ENCODE measurements at regions of chr13 and their contacts with region 1.

Region 1: DNA sequence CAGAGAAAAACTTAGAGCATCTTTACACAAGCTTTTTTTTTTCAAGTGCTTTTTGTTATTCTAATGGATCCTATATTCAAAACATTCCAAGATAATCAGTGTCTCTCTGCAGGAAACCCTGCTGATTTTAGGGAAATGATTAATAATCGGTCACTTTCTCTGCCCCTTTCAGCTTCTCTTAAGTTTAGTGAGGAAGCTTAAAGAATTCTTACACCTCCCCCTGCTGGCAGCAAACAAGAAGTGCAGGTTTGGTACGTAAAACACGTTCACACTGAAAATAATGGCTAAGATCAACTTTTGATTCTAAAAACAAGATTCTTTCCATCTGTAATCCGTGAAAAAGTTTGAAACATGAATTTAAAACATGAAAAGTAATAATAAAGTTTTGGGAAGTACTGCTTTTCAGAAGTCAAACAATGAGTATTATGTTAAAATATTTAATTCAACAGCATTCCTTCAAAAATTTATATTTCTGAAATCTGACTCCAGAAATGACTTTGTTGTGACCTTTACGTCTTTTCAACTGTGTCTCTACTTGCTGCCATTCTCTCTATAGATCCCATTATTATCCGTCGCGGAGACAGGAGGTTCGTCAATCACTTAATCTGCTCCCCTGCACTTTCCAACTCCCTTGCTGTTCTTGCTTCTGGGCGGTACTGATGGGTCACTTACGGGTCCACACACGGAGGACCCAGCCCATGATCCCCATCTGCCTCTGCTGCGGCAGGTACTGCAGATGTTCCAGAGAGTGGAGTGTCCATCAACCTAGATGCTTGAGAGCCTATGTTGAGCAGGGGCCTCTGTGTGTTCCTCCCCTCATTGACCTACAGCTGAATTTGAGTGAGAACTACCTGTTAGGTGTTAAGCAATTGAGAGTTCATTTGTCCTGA is 203.1 kb upstream of the EDNRB start:
- DNase-seq: peak in 8 of 14 experiments; percentile 3 to 72 (median 24)
- ATAC-seq: no peak
- H3K4me3 ChIP-seq: no peak overlapping the region
- H3K4me3 Mint-ChIP-seq: no peak overlapping the region
- H3K27ac ChIP-seq: no peak overlapping the region
- H3K27ac Mint-ChIP-seq: no peak overlapping the region
- H3K4me1 ChIP-seq: no peaks in the 10 kb centered on the region
- H3K4me1 Mint-ChIP-seq: no peaks in the 10 kb centered on the region
- H3K27me3 ChIP-seq: peaks cover 0 to 12% of the 10 kb centered on the region in 2 experiments
- H3K27me3 Mint-ChIP-seq: peaks cover 22% of the 10 kb centered on the region
- CTCF ChIP-seq: peak; percentile 90

Region 2: DNA sequence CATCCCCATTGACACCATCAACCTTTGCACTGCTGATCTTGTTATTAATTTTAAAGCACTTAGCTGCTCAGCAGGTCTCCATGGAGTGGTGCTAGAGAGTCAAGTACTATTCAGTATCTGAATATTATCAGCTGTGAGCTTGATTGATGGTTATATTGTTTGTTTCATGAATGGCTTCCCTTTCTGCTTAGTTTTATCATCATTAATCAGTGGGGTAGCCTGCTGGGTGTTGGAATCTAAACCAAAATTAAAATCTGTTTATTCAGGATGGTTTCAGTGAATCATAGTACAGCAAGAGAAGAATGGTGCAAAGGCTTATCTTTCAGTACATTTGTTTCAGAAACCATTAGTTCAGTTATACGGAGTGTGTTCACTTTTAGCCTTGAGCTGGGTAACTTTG is 628.7 kb before region 1 on chr13:
- CTCF ChIA-PET with region 1: no interaction called
- POLR2A ChIA-PET with region 1: no interaction called
- intact Hi-C with region 1: loop called in 1 of 2 experiments (anchors 5 kb)
- DNase-seq: peak in 2 of 14 experiments; percentile 23 to 29
- ATAC-seq: no peak
- H3K4me3 ChIP-seq: no peak overlapping the region
- H3K4me3 Mint-ChIP-seq: no peak overlapping the region
- H3K27ac ChIP-seq: no peak overlapping the region
- H3K27ac Mint-ChIP-seq: no peak overlapping the region
- H3K4me1 ChIP-seq: no peaks in the 10 kb centered on the region
- H3K4me1 Mint-ChIP-seq: no peaks in the 10 kb centered on the region
- H3K27me3 ChIP-seq: no peaks in the 10 kb centered on the region
- H3K27me3 Mint-ChIP-seq: no peaks in the 10 kb centered on the region
- CTCF ChIP-seq: peak; percentile 25

Region 3: DNA sequence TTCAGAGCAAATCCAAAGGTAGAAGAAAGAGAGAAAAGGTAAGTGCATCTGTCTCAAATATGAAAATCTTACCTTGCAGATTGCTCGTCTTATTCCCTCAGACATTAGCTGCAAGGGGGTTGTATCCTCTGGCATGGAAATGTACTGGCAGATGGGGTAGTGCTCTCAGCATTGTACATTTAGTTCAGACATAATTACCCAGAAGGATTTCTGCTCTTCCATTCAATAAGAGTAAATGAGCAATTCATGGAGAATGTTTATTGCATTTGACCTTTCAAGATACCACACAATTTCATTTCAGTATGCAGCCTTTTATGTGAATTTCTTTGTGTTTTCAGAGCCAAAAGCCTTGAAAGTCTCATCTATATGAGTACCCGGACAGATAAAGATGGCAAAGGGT is 522.4 kb before region 1 on chr13:
- CTCF ChIA-PET with region 1: no interaction called
- POLR2A ChIA-PET with region 1: no interaction called
- intact Hi-C with region 1: loop called in 1 of 2 experiments (anchors 5 kb)
- DNase-seq: no peak
- ATAC-seq: no peak
- H3K4me3 ChIP-seq: no peak overlapping the region
- H3K4me3 Mint-ChIP-seq: no peak overlapping the region
- H3K27ac ChIP-seq: no peak overlapping the region
- H3K27ac Mint-ChIP-seq: no peak overlapping the region
- H3K4me1 ChIP-seq: no peaks in the 10 kb centered on the region
- H3K4me1 Mint-ChIP-seq: no peaks in the 10 kb centered on the region
- H3K27me3 ChIP-seq: peaks cover 0 to 12% of the 10 kb centered on the region in 2 experiments
- H3K27me3 Mint-ChIP-seq: peaks cover 7% of the 10 kb centered on the region
- CTCF ChIP-seq: no peak

Region 4: GRCh38 chr13:77779552-77780272 is 342.0 kb before region 1 on chr13:
- CTCF ChIA-PET with region 1: no interaction called
- POLR2A ChIA-PET with region 1: no interaction called
- intact Hi-C with region 1: loop called in 1 of 2 experiments (anchors 1 kb)
- DNase-seq: peak in 4 of 14 experiments; percentile 29 to 63 (median 54)
- ATAC-seq: no peak
- H3K4me3 ChIP-seq: no peak overlapping the region
- H3K4me3 Mint-ChIP-seq: no peak overlapping the region
- H3K27ac ChIP-seq: no peak overlapping the region
- H3K27ac Mint-ChIP-seq: no peak overlapping the region
- H3K4me1 ChIP-seq: peaks cover 4% of the 10 kb centered on the region
- H3K4me1 Mint-ChIP-seq: peaks cover 11% of the 10 kb centered on the region
- H3K27me3 ChIP-seq: no peaks in the 10 kb centered on the region
- H3K27me3 Mint-ChIP-seq: no peaks in the 10 kb centered on the region
- CTCF ChIP-seq: peak; percentile 78

Region 5: DNA sequence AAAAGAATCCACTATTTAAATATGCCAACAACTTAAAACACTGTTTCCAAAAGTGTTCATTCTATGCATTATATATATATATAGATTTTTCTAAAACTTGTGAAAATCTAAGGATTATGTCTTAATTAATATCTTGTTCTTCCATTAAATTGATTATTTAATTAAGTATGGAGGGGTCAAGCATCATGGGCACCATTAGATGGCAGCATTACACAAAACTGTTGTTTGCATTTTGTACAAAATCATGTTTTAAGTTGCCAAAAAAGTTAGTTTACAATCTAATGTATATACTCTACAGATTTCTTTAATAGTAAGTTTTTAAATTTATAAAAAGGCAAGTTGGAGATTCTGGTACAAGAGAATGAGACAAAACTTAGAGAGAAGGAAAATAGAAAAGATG is 10.1 kb after region 1 on chr13:
- CTCF ChIA-PET with region 1: interaction called, 14 read pairs
- POLR2A ChIA-PET with region 1: no interaction called
- intact Hi-C with region 1: no loop called
- DNase-seq: no peak
- ATAC-seq: no peak
- H3K4me3 ChIP-seq: no peak overlapping the region
- H3K4me3 Mint-ChIP-seq: no peak overlapping the region
- H3K27ac ChIP-seq: no peak overlapping the region
- H3K27ac Mint-ChIP-seq: no peak overlapping the region
- H3K4me1 ChIP-seq: no peaks in the 10 kb centered on the region
- H3K4me1 Mint-ChIP-seq: no peaks in the 10 kb centered on the region
- H3K27me3 ChIP-seq: no peaks in the 10 kb centered on the region
- H3K27me3 Mint-ChIP-seq: peaks cover 7% of the 10 kb centered on the region
- CTCF ChIP-seq: peak; percentile 3

Region 6: DNA sequence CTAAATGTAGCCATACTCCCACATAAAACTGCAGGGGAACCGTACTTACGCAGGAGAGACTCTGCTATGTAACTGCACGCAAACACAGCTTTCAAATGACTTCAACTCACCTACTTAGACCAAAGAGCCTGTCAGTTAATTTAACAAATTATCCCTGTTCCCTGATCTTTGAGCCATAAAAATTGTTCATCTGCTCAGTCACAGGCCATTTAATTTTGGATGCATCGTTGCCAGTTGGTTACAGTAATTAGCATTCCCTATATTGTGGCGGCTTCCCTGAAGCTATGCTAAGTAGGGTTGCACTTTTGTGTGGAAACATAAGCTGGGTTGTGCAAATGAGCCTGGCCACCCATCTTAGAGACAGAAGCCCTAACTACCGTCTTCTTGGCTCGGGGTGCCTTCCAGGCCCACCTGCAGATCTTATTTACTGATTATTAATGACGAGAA is 558.4 kb after region 1 on chr13:
- CTCF ChIA-PET with region 1: no interaction called
- POLR2A ChIA-PET with region 1: no interaction called
- intact Hi-C with region 1: no loop called
- DNase-seq: no peak
- ATAC-seq: no peak
- H3K4me3 ChIP-seq: no peak overlapping the region
- H3K4me3 Mint-ChIP-seq: no peak overlapping the region
- H3K27ac ChIP-seq: no peak overlapping the region
- H3K27ac Mint-ChIP-seq: no peak overlapping the region
- H3K4me1 ChIP-seq: no peaks in the 10 kb centered on the region
- H3K4me1 Mint-ChIP-seq: no peaks in the 10 kb centered on the region
- H3K27me3 ChIP-seq: peaks cover 0 to 15% of the 10 kb centered on the region in 2 experiments
- H3K27me3 Mint-ChIP-seq: peaks cover 21% of the 10 kb centered on the region
- CTCF ChIP-seq: no peak